Breast epithelium (tissue), 4 donors: ENCODE measurements at regions of chr9 and their contacts with region 1.

Region 1: GRCh38 chr9:72526901-72527800 is 5.7 kb downstream of the TMC1 start:
- DNase-seq: peak; percentile 79 to 81
- H3K4me3 ChIP-seq: peak overlapping the region in 2 of 3 donors; percentile 30 to 50
- H3K27ac ChIP-seq: peak overlapping the region; percentile 84 to 87
- H3K4me1 ChIP-seq: peaks cover 5% of the 10 kb centered on the region in 2 donors
- H3K27me3 ChIP-seq: no peaks in the 10 kb centered on the region
- CTCF ChIP-seq: peak in 1 of 3 donors; percentile 5
- POLR2A ChIP-seq: no peak

Region 2: GRCh38 chr9:71683598-71684235 is 843.4 kb before region 1 on chr9:
- intact Hi-C with region 1: no loop called
- DNase-seq: peak in 1 of 2 donors; percentile 49
- H3K4me3 ChIP-seq: no peak overlapping the region
- H3K27ac ChIP-seq: peak overlapping the region in 1 of 2 donors; percentile 65
- H3K4me1 ChIP-seq: peaks cover 0 to 11% of the 10 kb centered on the region in 2 donors
- H3K27me3 ChIP-seq: no peaks in the 10 kb centered on the region
- CTCF ChIP-seq: peak in 1 of 3 donors; percentile 49
- POLR2A ChIP-seq: no peak

Region 3: GRCh38 chr9:72541676-72542289 is 14.6 kb after region 1 on chr9:
- intact Hi-C with region 1: loop called (anchors 1 kb)
- DNase-seq: no peak
- H3K4me3 ChIP-seq: no peak overlapping the region
- H3K27ac ChIP-seq: no peak overlapping the region
- H3K4me1 ChIP-seq: peaks cover 0 to 7% of the 10 kb centered on the region in 2 donors
- H3K27me3 ChIP-seq: no peaks in the 10 kb centered on the region
- CTCF ChIP-seq: no peak
- POLR2A ChIP-seq: no peak

Region 4: GRCh38 chr9:73037613-73038012 is 510.5 kb after region 1 on chr9:
- intact Hi-C with region 1: no loop called
- DNase-seq: no peak
- H3K4me3 ChIP-seq: no peak overlapping the region
- H3K27ac ChIP-seq: peak overlapping the region in 1 of 2 donors; percentile 86
- H3K4me1 ChIP-seq: no peaks in the 10 kb centered on the region
- H3K27me3 ChIP-seq: no peaks in the 10 kb centered on the region
- CTCF ChIP-seq: no peak
- POLR2A ChIP-seq: no peak